GM13977 (cell line): ENCODE measurements at regions of chr22 and their contacts with region 1.

Region 1: GRCh38 chr22:41832553-41833368 is at the start of gene SREBF2:
- DNase-seq: peak; percentile 98
- CTCF ChIP-seq: no peak

Region 2: DNA sequence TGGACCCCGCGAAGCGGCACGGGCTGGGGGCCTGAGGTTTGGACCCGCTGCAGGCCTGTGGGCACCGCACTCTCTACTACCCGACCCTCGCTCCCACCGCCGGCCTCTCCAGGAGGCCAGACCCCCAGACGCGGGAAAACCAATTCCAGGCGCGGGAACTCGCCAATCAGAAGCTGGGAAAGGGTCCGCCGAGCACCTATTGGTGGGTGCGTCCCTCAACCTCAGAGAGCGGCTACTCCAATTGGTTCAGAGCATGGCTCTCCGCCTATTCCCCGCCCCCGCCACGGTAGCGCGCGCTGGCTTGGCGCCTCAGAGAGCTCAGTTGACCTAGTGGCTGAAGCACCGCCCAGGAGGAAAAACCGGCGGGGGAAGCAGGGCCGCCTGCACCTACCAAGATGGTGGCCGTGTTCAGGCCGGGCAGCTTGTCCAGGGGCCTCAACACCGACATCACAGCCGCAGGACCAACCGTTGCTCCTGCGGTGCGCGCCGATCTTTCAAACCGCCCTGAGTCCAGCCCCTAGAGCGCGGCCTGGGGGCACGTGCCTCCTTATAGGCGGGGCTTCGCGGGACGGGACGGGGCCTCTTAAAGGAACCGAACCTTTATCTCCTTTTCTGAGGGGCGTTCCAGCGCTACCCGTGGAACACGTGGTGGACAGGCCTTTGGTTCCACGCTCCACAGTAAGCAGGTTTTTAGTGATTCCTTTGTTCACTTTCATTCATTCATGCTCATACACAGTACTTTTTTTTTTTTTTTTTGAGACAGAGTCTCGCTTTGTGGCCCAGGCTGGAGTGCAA is 114.1 kb after region 1 on chr22 and contains the start of gene CENPM:
- in situ Hi-C with region 1: loop called (anchors 10 kb)
- DNase-seq: peak; percentile 82
- CTCF ChIP-seq: no peak